Heart left ventricle (tissue), 16 donors: ENCODE measurements at regions of chr1 and their contacts with region 1.

Region 1: DNA sequence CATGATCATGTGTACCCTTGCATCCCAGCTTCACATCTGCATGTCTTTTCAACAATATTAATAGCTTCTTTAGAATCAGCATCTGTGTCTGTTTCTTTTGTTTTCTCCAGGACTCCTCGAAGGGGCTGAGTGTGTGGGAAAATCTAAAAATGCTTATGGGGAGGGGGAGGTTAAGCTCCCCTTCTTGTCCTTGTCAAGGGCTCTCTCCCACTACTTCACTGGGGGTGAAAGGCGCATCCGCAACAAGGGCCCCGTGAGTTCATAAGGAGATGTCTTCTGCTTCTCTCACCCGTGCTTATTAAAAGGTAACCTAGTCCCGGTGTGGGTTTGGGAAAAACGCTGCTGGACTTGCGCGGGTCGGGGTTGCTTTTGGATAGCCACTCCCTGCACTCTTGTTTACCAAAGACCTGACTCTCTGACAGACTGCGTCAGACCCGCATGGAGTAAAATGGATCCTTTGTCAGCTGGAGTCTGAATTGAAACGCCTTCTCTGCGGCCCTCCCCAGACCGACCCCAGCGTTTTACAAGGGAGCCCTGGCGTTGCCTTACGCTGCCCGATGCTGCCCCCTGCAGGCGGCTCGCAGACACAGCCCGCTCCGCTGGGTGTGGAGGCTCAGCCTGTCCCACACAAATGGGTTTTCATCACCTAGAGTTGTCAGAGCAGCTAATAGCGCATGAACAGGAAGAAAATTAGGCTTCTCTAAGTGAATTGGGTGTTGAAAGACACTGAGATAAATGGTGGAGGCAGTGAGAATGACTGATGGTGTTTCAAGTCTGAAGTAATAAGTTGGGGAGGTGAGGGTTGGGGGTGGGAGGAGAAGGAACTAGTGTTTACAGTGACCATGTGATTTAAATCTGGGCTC is 53.8 kb downstream of the IER5 start:
- DNase-seq: peak; percentile 86 to 93 (median 88)
- ATAC-seq: peak; percentile 94 to 96 (median 95)
- H3K4me3 ChIP-seq: peak overlapping the region in 9 of 12 donors; percentile 15 to 52 (median 33)
- H3K27ac ChIP-seq: peak overlapping the region in 5 of 12 donors; percentile 1 to 60 (median 30)
- H3K4me1 ChIP-seq: peaks cover 0 to 48% (median 26%) of the 10 kb centered on the region in 12 donors
- H3K27me3 ChIP-seq: no peaks in the 10 kb centered on the region
- CTCF ChIP-seq: peak; percentile 91 to 99 (median 97)
- POLR2A ChIP-seq: no peak

Region 2: GRCh38 chr1:180837020-180837419 is 305.3 kb before region 1 on chr1:
- intact Hi-C with region 1: no loop called
- DNase-seq: no peak
- ATAC-seq: no peak
- H3K4me3 ChIP-seq: no peak overlapping the region
- H3K27ac ChIP-seq: no peak overlapping the region
- H3K4me1 ChIP-seq: peaks cover 0 to 6% (median 0%) of the 10 kb centered on the region in 12 donors
- H3K27me3 ChIP-seq: no peaks in the 10 kb centered on the region
- CTCF ChIP-seq: no peak
- POLR2A ChIP-seq: no peak

Region 3: DNA sequence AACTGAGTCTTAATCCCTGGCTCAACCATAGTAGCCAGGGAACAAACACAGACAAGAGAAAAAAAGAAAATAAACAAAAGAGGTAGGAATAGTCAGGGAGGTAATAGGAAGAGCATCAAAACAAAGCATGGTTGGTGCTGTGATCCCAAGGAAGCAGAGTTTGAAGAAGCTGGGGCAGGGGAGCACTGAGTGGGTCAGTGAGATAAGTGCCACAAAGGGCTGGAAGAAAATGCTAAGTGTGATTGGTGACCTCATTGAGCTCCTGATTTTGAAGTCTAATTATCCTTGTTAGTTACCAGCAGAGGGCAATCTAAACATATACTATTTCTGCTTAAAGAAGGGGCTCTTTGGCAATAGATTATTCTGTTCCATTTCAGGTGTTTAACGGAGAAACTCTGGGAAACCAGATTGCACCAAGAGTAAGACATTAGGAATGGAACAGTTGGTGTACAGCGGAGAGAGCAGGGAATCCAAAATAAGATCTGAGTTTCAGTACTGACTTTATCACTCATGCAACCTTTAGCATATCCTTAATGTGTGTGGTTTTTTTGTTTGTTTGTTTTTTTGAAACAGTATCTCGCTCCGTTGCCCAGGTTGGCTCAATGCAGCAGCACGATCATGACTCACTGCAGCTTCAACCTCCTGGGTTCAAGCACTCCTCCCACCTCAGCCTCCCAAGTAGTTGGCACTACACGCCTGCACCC is 260.4 kb before region 1 on chr1:
- intact Hi-C with region 1: loop called in 7 of 10 experiments (anchors 2 to 5 kb)
- DNase-seq: no peak
- ATAC-seq: peak in 3 of 4 donors; percentile 45 to 69 (median 55)
- H3K4me3 ChIP-seq: no peak overlapping the region
- H3K27ac ChIP-seq: peak overlapping the region in 1 of 12 donors; percentile 33
- H3K4me1 ChIP-seq: peaks cover 0 to 8% (median 0%) of the 10 kb centered on the region in 12 donors
- H3K27me3 ChIP-seq: no peaks in the 10 kb centered on the region
- CTCF ChIP-seq: peak in 11 of 12 donors; percentile 28 to 63 (median 47)
- POLR2A ChIP-seq: no peak

Region 4: GRCh38 chr1:181014477-181015250 is 127.7 kb before region 1 on chr1:
- intact Hi-C with region 1: no loop called
- DNase-seq: no peak
- ATAC-seq: peak in 1 of 4 donors; percentile 27
- H3K4me3 ChIP-seq: no peak overlapping the region
- H3K27ac ChIP-seq: peak overlapping the region in 1 of 12 donors; percentile 65
- H3K4me1 ChIP-seq: peaks cover 0 to 76% (median 16%) of the 10 kb centered on the region in 12 donors
- H3K27me3 ChIP-seq: no peaks in the 10 kb centered on the region
- CTCF ChIP-seq: no peak
- POLR2A ChIP-seq: no peak

Region 5: DNA sequence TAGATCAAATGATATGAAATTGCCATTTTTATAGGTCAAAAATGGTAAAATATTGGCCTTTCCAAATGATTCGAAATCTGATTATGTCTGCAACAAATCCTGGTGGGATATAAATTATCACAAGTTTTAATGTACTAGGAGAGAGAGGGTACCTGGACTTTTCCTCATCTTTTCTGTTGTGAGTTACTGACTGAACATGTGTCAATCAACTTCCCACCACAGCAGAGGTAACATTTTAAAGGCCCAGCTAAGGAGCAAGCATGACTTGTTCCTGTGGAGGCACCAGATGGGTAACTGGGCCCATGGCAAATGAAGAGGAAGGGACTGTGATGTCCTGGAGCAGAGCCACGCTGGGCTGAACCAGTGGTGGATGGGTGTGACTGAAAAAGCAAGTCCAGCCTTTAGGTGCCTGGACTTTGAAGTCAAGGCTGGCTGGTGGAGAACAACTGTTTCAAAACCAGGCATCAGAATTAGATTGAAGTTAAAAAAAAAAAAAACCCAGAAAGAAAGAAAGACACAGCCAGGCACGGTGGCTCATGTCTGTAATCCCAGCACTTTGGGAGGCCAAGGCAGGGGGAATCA is 102.0 kb before region 1 on chr1:
- intact Hi-C with region 1: loop called (anchors 1 to 5 kb)
- DNase-seq: no peak
- ATAC-seq: no peak
- H3K4me3 ChIP-seq: no peak overlapping the region
- H3K27ac ChIP-seq: no peak overlapping the region
- H3K4me1 ChIP-seq: peaks cover 0 to 72% (median 0%) of the 10 kb centered on the region in 12 donors
- H3K27me3 ChIP-seq: no peaks in the 10 kb centered on the region
- CTCF ChIP-seq: no peak
- POLR2A ChIP-seq: no peak

Region 6: DNA sequence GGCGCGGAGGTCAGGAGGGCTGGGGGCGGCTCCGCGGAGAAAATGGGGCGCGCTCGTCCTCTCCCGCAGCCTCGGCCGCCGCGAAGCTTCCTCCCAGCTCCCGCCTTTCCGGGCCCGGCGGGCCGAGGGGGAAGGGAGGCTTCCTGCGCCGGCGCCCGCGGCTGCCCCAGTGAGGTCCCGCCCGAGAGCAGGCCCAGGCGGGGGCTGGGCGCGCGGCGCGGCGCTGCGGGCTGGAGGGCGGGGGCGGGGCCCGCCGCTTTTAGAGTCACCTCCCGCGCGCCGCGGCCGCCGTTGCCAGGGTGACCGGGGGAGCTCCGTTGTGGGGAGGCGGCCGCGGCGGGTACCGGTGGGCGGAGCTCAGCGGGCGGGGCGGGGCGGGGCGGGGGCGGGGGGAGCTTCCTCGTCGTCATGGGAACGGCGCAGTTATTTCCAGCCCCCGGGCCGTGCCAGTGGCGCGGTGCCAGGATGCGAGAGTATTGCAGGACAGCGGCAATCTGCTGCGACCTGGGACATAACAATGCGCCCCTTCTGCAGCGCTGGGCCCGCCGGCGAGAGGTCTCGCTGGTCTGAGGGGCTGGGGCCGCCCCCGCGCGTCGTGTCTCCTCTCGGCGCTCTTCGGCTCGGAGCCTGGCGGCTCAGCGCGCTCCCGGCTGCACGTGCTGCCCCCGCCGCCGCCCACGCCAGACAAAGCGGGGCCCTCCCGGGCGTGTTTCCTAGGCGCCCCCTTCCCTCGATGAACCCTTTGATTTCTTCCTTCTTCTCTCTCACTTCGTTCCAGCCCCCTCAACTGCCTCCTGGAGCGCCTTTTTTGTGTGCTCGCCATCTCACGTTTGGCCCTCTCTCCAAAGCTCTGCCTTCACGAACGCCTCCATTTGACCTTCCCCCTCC is 36.9 kb before region 1 on chr1:
- intact Hi-C with region 1: loop called in 1 of 10 experiments (anchors 5 kb)
- DNase-seq: peak; percentile 96 to 99 (median 97)
- ATAC-seq: peak; percentile 86 to 97 (median 94)
- H3K4me3 ChIP-seq: peak overlapping the region; percentile 48 to 89 (median 71)
- H3K27ac ChIP-seq: peak overlapping the region; percentile 68 to 95 (median 90)
- H3K4me1 ChIP-seq: peaks cover 0 to 72% (median 29%) of the 10 kb centered on the region in 12 donors
- H3K27me3 ChIP-seq: no peaks in the 10 kb centered on the region
- CTCF ChIP-seq: no peak
- POLR2A ChIP-seq: peak in 1 of 2 donors; percentile 56

Region 7: DNA sequence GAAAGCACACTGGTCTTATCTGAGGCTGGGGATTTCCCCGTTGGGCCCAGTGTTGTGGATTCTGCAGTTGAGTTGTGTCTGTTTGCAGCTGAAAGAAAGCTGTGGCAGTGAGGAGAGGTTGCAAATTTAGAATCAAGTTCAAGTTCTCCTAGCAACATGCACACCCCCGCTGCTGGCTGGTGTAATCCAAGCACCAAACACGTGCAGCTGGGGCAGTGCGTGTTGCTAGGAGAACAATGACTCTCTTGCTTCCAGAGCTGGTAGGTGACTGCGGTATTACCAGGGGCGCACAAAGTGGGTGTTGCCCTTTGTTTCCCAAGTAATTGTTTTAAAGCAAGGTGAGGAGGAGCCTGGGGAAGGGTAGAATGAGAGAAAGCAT is 37.6 kb after region 1 on chr1:
- intact Hi-C with region 1: no loop called
- DNase-seq: peak; percentile 73 to 87 (median 75)
- ATAC-seq: peak; percentile 80 to 93 (median 88)
- H3K4me3 ChIP-seq: peak overlapping the region in 1 of 12 donors; percentile 0
- H3K27ac ChIP-seq: peak overlapping the region in 10 of 12 donors; percentile 15 to 84 (median 64)
- H3K4me1 ChIP-seq: peaks cover 0 to 45% (median 14%) of the 10 kb centered on the region in 12 donors
- H3K27me3 ChIP-seq: no peaks in the 10 kb centered on the region
- CTCF ChIP-seq: no peak
- POLR2A ChIP-seq: no peak